Psoas muscle (tissue), 8 donors: ENCODE measurements at regions of chr19 and their contacts with region 1.

Region 1: DNA sequence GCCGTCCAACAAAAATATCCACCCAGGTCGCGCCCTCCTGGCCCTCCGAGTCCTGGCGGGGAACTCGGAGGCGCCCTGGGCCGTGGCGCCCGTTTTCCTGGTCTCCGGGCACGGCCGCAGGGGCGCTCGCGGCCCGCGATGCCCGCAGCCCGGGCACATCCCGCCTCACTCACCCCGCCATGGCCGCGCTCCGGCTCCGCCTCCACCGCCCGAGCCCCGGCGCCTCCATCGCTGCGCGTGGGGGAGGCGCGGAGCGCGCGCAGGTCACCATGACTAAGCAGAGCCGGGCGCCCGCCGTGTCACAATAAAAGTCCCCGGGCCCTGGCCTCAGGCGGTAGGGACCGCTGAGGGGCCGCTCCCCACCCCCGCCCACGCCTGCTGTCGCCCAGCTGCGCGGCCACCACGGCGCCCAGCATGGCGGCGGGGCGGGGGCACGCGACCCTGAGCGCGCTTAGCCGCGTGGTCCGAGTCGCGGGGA is 593 bp downstream of the KEAP1 start:
- DNase-seq: peak; percentile 95 to 97
- ATAC-seq: peak; percentile 89 to 95 (median 94)
- H3K4me3 ChIP-seq: peak overlapping the region; percentile 90
- H3K27ac ChIP-seq: peak overlapping the region; percentile 98
- H3K4me1 ChIP-seq: peaks cover 32% of the 10 kb centered on the region
- H3K27me3 ChIP-seq: no peaks in the 10 kb centered on the region
- CTCF ChIP-seq: no peak

Region 2: DNA sequence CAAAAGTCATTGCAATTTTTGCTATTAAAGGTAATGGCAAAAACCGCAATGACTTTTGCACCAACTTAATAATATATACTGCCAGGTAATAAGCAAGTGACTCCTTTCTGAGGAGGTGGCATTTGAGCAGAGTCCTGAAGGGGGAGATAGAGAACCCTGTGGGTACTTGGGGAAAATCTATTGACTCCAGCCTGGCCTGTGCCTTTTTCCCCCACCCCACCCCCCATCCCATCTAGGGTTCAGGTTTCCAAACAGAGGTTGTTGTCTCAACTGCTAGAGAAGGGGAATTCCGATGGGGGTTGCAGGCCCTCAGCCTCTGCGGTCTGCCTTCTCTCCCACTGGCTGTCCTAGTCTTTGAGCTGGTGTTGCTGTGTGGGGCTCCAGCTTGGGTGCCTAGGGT is 282.9 kb before region 1 on chr19:
- intact Hi-C with region 1: no loop called
- DNase-seq: no peak
- ATAC-seq: no peak
- H3K4me3 ChIP-seq: no peak overlapping the region
- H3K27ac ChIP-seq: no peak overlapping the region
- H3K4me1 ChIP-seq: no peaks in the 10 kb centered on the region
- H3K27me3 ChIP-seq: no peaks in the 10 kb centered on the region
- CTCF ChIP-seq: no peak

Region 3: GRCh38 chr19:10543420-10544241 is 41.1 kb after region 1 on chr19 and contains the start of gene ATG4D:
- intact Hi-C with region 1: loop called in 1 of 2 experiments (anchors 5 kb)
- DNase-seq: peak; percentile 79 to 89
- ATAC-seq: peak; percentile 89 to 94 (median 92)
- H3K4me3 ChIP-seq: peak within 1 kb of the TSS; percentile 81
- H3K27ac ChIP-seq: peak within 1 kb of the TSS; percentile 85
- H3K4me1 ChIP-seq: peaks cover 11% of the 10 kb centered on the region
- H3K27me3 ChIP-seq: no peaks in the 10 kb centered on the region
- CTCF ChIP-seq: no peak
- total RNA-seq, gene ATG4D: 42.5 to 71.8 (median 60.8) TPM

Region 4: GRCh38 chr19:10565567-10566407 is 63.2 kb after region 1 on chr19 and contains the start of gene KRI1:
- intact Hi-C with region 1: loop called in 1 of 2 experiments (anchors 5 kb)
- DNase-seq: peak; percentile 98 to 99
- ATAC-seq: peak; percentile 84 to 87 (median 85)
- H3K4me3 ChIP-seq: peak within 1 kb of the TSS; percentile 92
- H3K27ac ChIP-seq: peak within 1 kb of the TSS; percentile 82
- H3K4me1 ChIP-seq: peaks cover 33% of the 10 kb centered on the region
- H3K27me3 ChIP-seq: no peaks in the 10 kb centered on the region
- CTCF ChIP-seq: peak; percentile 33
- total RNA-seq, gene KRI1: 17.3 to 20.6 (median 20.3) TPM